MCF 10A (cell line): ENCODE measurements at regions of chr4 and their contacts with region 1.

Region 1: GRCh38 chr4:86934771-86935565 is at the start of gene AFF1:
- DNase-seq: peak; percentile 88
- H3K4me3 Mint-ChIP-seq: peak within 1 kb of the TSS; percentile 85
- H3K27ac Mint-ChIP-seq: peak within 1 kb of the TSS; percentile 91
- H3K4me1 Mint-ChIP-seq: peaks cover 35% of the 10 kb centered on the region
- H3K27me3 Mint-ChIP-seq: no peaks in the 10 kb centered on the region
- CTCF ChIP-seq: peak; percentile 23
- total RNA-seq, gene AFF1: 56.2 and 61.9 TPM in 2 replicates

Region 2: GRCh38 chr4:86946868-86947500 is 12.0 kb after region 1 on chr4:
- CTCF ChIA-PET with region 1: interaction called, 7 read pairs
- POLR2A ChIA-PET with region 1: interaction called, 17 read pairs
- intact Hi-C with region 1: no loop called
- DNase-seq: no peak
- H3K4me3 Mint-ChIP-seq: no peak overlapping the region
- H3K27ac Mint-ChIP-seq: peak overlapping the region; percentile 1
- H3K4me1 Mint-ChIP-seq: peaks cover 23% of the 10 kb centered on the region
- H3K27me3 Mint-ChIP-seq: no peaks in the 10 kb centered on the region
- CTCF ChIP-seq: no peak

Region 3: GRCh38 chr4:86977621-86978184 is 42.7 kb after region 1 on chr4:
- CTCF ChIA-PET with region 1: no interaction called
- POLR2A ChIA-PET with region 1: interaction called, 23 read pairs
- intact Hi-C with region 1: loop called (anchors 1 kb)
- DNase-seq: peak; percentile 94
- H3K4me3 Mint-ChIP-seq: peak overlapping the region; percentile 43
- H3K27ac Mint-ChIP-seq: peak overlapping the region; percentile 96
- H3K4me1 Mint-ChIP-seq: peaks cover 51% of the 10 kb centered on the region
- H3K27me3 Mint-ChIP-seq: no peaks in the 10 kb centered on the region
- CTCF ChIP-seq: no peak

Region 4: GRCh38 chr4:87093443-87094123 is 158.6 kb after region 1 on chr4:
- CTCF ChIA-PET with region 1: interaction called, 3 read pairs
- POLR2A ChIA-PET with region 1: interaction called, 30 read pairs
- intact Hi-C with region 1: loop called (anchors 1 kb)
- DNase-seq: peak; percentile 59
- H3K4me3 Mint-ChIP-seq: peak overlapping the region; percentile 23
- H3K27ac Mint-ChIP-seq: peak overlapping the region; percentile 87
- H3K4me1 Mint-ChIP-seq: peaks cover 25% of the 10 kb centered on the region
- H3K27me3 Mint-ChIP-seq: no peaks in the 10 kb centered on the region
- CTCF ChIP-seq: peak; percentile 57

Region 5: DNA sequence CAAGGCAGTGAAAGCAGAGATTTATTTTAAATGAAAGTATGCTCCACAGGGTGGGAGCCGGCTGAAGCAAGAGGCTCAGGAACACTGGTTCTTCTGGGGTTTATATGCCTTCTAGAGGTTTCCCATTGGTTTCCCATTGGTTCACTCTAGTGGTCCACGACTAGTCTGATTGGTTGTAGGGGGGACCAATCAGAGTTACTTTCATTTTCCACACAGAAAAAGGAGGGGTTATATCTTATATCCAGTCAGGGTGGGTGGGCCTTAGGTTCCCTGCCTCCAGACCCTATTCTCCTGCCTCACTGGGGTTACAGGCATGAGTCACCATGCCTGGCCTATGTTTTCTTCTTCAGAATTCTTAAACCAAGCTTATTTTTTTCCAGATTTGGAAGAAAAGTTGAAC is 183.9 kb after region 1 on chr4:
- CTCF ChIA-PET with region 1: interaction called, 7 read pairs
- POLR2A ChIA-PET with region 1: interaction called, 61 read pairs
- intact Hi-C with region 1: loop called (anchors 2 kb)
- DNase-seq: peak; percentile 28
- H3K4me3 Mint-ChIP-seq: no peak overlapping the region
- H3K27ac Mint-ChIP-seq: no peak overlapping the region
- H3K4me1 Mint-ChIP-seq: peaks cover 29% of the 10 kb centered on the region
- H3K27me3 Mint-ChIP-seq: no peaks in the 10 kb centered on the region
- CTCF ChIP-seq: no peak

Region 6: GRCh38 chr4:87911252-87911774 is 976.3 kb after region 1 on chr4:
- CTCF ChIA-PET with region 1: no interaction called
- POLR2A ChIA-PET with region 1: no interaction called
- intact Hi-C with region 1: no loop called
- DNase-seq: no peak
- H3K4me3 Mint-ChIP-seq: no peak overlapping the region
- H3K27ac Mint-ChIP-seq: no peak overlapping the region
- H3K4me1 Mint-ChIP-seq: peaks cover 5% of the 10 kb centered on the region
- H3K27me3 Mint-ChIP-seq: no peaks in the 10 kb centered on the region
- CTCF ChIP-seq: no peak